H1 (cell line): ENCODE measurements at regions of chr12 and their contacts with region 1.

Region 1: GRCh38 chr12:110431957-110432587 is 18.1 kb downstream of the ARPC3 start:
- DNase-seq: no peak
- H3K4me3 ChIP-seq: peak overlapping the region in 1 of 4 experiments; percentile 65; a peak in 1 of 8 replicates
- H3K27ac ChIP-seq: no peak overlapping the region
- H3K4me1 ChIP-seq: no peaks in the 10 kb centered on the region
- H3K27me3 ChIP-seq: no peaks in the 10 kb centered on the region
- CTCF ChIP-seq: no peak
- EP300 ChIP-seq: no peak
- POLR2A ChIP-seq: no peak
- RAD21 ChIP-seq: no peak

Region 2: GRCh38 chr12:110355073-110355472 is 77.0 kb before region 1 on chr12:
- CTCF ChIA-PET with region 1: interaction called, 25 read pairs
- POLR2A ChIA-PET with region 1: interaction called, 3 read pairs
- DNase-seq: no peak
- H3K4me3 ChIP-seq: no peak overlapping the region
- H3K27ac ChIP-seq: no peak overlapping the region
- H3K4me1 ChIP-seq: no peaks in the 10 kb centered on the region
- H3K27me3 ChIP-seq: no peaks in the 10 kb centered on the region
- CTCF ChIP-seq: peak; percentile 38 to 71 (median 63)
- EP300 ChIP-seq: no peak
- POLR2A ChIP-seq: no peak
- RAD21 ChIP-seq: peak; percentile 42 to 48

Region 3: DNA sequence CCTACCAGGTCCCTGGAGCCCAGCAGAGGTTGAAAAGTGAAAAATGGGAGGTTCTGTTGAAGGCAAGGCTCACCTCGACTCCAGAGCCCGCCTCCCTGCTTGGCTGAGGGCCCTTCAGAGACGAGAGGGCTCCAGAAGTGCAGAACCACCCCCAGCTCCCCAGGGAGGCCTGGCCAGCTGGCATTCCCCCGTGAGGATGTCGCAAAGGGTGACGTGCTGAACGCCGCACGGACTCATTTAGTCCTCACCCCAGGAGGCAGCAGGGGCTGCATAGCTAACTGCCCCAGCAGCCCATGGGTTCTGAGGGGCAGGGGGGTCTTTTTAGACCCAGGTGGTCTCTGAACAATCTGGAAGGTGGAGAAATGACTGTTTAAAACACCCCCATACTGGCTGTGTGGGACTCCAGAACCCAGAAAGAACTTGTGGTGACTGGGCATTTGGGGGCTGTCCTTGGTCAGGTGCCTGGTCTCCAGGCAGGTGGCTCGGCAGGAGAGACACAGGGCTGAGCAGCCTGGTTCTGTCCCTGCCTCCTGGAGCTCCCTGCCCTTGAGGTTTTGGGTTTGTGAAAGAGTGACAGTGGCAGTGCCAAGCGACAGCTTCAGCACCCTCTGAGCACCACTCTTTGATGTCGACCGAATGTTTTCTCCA is 60.5 kb before region 1 on chr12:
- CTCF ChIA-PET with region 1: interaction called, 11 read pairs
- POLR2A ChIA-PET with region 1: interaction called, 8 read pairs
- DNase-seq: no peak
- H3K4me3 ChIP-seq: no peak overlapping the region
- H3K27ac ChIP-seq: no peak overlapping the region; the same call in 1 of the 2 replicates
- H3K4me1 ChIP-seq: no peaks in the 10 kb centered on the region; a peak in 1 of 7 replicates
- H3K27me3 ChIP-seq: no peaks in the 10 kb centered on the region
- CTCF ChIP-seq: no peak
- EP300 ChIP-seq: no peak
- POLR2A ChIP-seq: peak in 1 of 2 experiments; percentile 7; a peak in 1 of 3 replicates
- RAD21 ChIP-seq: no peak

Region 4: GRCh38 chr12:110379197-110379596 is 52.9 kb before region 1 on chr12:
- CTCF ChIA-PET with region 1: interaction called, 15 read pairs
- POLR2A ChIA-PET with region 1: no interaction called
- DNase-seq: no peak
- H3K4me3 ChIP-seq: no peak overlapping the region
- H3K27ac ChIP-seq: no peak overlapping the region
- H3K4me1 ChIP-seq: no peaks in the 10 kb centered on the region
- H3K27me3 ChIP-seq: no peaks in the 10 kb centered on the region
- CTCF ChIP-seq: no peak
- EP300 ChIP-seq: no peak
- POLR2A ChIP-seq: no peak
- RAD21 ChIP-seq: no peak

Region 5: DNA sequence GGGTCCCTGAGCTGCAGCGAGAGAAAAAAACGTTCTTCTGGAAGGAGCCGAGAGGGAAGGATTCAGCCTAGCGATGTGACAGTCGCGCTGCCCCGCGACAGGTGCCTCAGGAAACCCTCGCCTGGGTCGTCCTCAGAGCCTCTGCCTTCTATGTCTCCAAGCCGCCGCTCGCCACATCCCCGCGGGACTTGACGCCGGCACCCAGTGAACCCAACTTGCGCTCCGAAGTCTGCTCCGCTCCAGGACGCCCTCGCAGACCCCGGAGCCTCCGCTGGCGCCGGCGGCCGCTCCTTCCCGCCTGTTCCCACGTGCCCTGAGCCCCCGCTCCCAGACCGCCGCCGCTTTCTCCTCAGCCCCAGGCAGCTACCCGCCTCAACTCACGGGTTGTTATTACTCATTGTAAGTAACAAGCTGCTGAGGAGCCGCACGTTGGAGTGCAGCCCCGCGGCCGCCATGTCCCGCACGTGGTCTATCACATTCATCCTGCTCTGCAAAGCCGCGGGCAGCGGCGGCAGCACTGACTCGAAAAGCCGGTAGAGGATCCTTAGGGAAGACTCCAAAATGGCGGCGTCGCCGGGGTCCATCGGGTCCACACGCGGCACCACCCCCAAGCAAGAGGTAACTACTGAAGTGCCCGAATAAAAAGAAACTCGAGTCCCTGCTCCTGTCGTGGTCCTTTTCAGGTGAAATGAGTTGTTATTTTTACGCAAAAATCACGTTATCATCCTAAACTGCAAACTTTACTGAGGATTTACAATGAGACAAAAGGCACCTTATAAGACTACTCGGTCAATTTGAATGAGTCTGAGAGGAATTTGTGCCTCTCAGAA is 28.7 kb before region 1 on chr12 and contains the start of gene ANAPC7:
- CTCF ChIA-PET with region 1: interaction called, 12 read pairs
- POLR2A ChIA-PET with region 1: interaction called, 11 read pairs
- DNase-seq: peak; percentile 77 to 90
- H3K4me3 ChIP-seq: peak within 1 kb of the TSS; percentile 69 to 96 (median 91)
- H3K27ac ChIP-seq: peak within 1 kb of the TSS; percentile 99
- H3K4me1 ChIP-seq: peaks cover 0 to 4% (median 0%) of the 10 kb centered on the region in 4 experiments; a peak in 1 of 7 replicates
- H3K27me3 ChIP-seq: no peaks in the 10 kb centered on the region
- CTCF ChIP-seq: no peak
- EP300 ChIP-seq: no peak
- POLR2A ChIP-seq: peak; percentile 78 to 96
- RAD21 ChIP-seq: peak; percentile 2 to 31; a peak in 2 of 4 replicates
- total RNA-seq, gene ANAPC7: 81.2 and 105 TPM in 2 replicates

Region 6: DNA sequence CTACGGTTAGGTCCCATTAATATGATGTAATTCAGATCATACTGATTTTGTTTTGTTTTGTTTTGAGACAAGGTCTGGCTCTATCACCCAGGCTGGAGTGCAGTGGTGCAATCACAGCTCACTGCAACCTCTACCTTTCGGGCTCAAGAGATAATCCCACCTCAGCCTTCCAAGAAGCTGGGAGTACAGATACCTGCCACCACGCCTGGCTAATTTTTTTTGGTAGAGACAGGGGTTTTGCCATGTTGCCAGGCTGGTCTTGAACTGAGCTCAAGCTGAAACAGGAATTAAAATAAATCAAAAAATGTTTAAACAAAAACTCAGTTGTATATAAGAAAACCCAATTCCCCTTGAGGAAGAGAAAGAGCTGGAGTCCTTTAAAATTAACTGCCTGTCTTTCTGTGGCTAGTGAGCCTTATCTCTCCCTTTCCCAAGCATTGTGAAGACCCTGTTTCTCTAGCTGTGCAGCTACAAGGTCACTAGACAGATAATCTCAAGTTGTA is 10.9 kb before region 1 on chr12:
- CTCF ChIA-PET with region 1: interaction called, 21 read pairs
- POLR2A ChIA-PET with region 1: interaction called, 5 read pairs
- DNase-seq: no peak
- H3K4me3 ChIP-seq: no peak overlapping the region
- H3K27ac ChIP-seq: no peak overlapping the region
- H3K4me1 ChIP-seq: peaks cover 3 to 5% (median 3%) of the 10 kb centered on the region in 4 experiments; a peak in 4 of 7 replicates
- H3K27me3 ChIP-seq: no peaks in the 10 kb centered on the region
- CTCF ChIP-seq: no peak
- EP300 ChIP-seq: no peak
- POLR2A ChIP-seq: no peak
- RAD21 ChIP-seq: no peak

Region 7: GRCh38 chr12:110449799-110450497 is 17.9 kb after region 1 on chr12 and contains the start of gene ARPC3:
- CTCF ChIA-PET with region 1: interaction called, 17 read pairs
- POLR2A ChIA-PET with region 1: interaction called, 5 read pairs
- DNase-seq: peak; percentile 89 to 94
- H3K4me3 ChIP-seq: peak within 1 kb of the TSS; percentile 63 to 93 (median 87)
- H3K27ac ChIP-seq: peak within 1 kb of the TSS; percentile 11; the same call in 1 of the 2 replicates
- H3K4me1 ChIP-seq: peaks cover 0 to 3% (median 0%) of the 10 kb centered on the region in 4 experiments; a peak in 1 of 7 replicates
- H3K27me3 ChIP-seq: no peaks in the 10 kb centered on the region
- CTCF ChIP-seq: peak; percentile 79 to 86 (median 81)
- EP300 ChIP-seq: no peak
- POLR2A ChIP-seq: peak in 1 of 2 experiments; percentile 56; a peak in 1 of 3 replicates
- RAD21 ChIP-seq: peak; percentile 78 to 86
- total RNA-seq, gene ARPC3: 160 and 170 TPM in 2 replicates

Region 8: GRCh38 chr12:110537605-110538409 is 105.7 kb after region 1 on chr12:
- CTCF ChIA-PET with region 1: no interaction called
- POLR2A ChIA-PET with region 1: no interaction called
- DNase-seq: no peak
- H3K4me3 ChIP-seq: no peak overlapping the region
- H3K27ac ChIP-seq: no peak overlapping the region
- H3K4me1 ChIP-seq: no peaks in the 10 kb centered on the region
- H3K27me3 ChIP-seq: no peaks in the 10 kb centered on the region
- CTCF ChIP-seq: no peak
- EP300 ChIP-seq: no peak
- POLR2A ChIP-seq: no peak
- RAD21 ChIP-seq: no peak